Endothelial cell of umbilical vein (primary cell): ENCODE measurements at regions of chr9 and their contacts with region 1.

Region 1: DNA sequence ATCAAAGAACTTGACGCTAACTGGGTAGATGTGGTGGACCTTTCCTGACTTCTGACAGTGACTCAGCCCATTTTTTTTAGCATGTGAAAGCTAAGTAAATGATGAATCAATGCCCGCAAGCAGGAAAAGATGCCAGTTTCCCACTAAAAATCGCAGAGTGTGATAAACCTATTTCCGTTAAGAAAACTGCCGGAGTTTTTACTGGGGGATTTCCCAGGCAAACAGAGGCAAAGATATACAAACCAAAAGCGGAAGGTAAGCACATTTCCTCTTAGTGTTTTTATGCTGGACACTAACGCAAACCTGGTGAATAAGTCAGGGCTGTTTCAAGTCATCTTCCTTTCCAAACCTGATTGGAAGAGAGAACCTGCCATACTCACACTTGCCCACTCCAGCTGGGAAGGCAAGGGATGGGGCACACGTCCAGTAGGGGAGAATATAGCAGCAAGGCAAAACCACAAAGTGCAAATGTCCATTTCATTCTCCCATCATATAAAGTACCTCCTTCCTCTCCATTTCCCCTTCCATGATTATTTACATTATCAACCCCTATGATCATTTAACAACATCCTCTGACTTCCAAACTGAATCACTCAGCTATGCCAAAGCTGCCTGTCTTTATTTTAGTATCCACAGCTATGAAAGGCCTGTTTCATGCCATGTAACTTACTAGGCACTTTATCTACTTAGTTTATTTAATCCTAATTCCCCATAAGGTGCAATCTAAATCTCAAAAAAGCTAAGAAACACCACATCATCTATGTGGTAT is 349.7 kb upstream of the RFX3 start:
- DNase-seq: peak; percentile 92
- H3K4me3 ChIP-seq: no peak overlapping the region
- H3K27ac ChIP-seq: peak overlapping the region; percentile 56
- H3K4me1 ChIP-seq: peaks cover 23% of the 10 kb centered on the region
- H3K27me3 ChIP-seq: peaks cover 14 to 19% of the 10 kb centered on the region in 2 experiments
- CTCF ChIP-seq: no peak
- POLR2A ChIP-seq: peak; percentile 38

Region 2: GRCh38 chr9:3323714-3324113 is 551.8 kb before region 1 on chr9:
- CTCF ChIA-PET with region 1: no interaction called
- POLR2A ChIA-PET with region 1: no interaction called
- dilution Hi-C with region 1: no loop called
- intact Hi-C with region 1: loop called (anchors 1 kb)
- DNase-seq: peak; percentile 38
- H3K4me3 ChIP-seq: no peak overlapping the region
- H3K27ac ChIP-seq: no peak overlapping the region
- H3K4me1 ChIP-seq: peaks cover 33% of the 10 kb centered on the region
- H3K27me3 ChIP-seq: no peaks in the 10 kb centered on the region
- CTCF ChIP-seq: no peak
- POLR2A ChIP-seq: no peak

Region 3: GRCh38 chr9:3863111-3863528 is 12.4 kb before region 1 on chr9:
- CTCF ChIA-PET with region 1: interaction called, 3 read pairs
- POLR2A ChIA-PET with region 1: no interaction called
- dilution Hi-C with region 1: no loop called
- intact Hi-C with region 1: loop called (anchors 1 kb)
- DNase-seq: peak; percentile 54
- H3K4me3 ChIP-seq: no peak overlapping the region
- H3K27ac ChIP-seq: peak overlapping the region; percentile 25
- H3K4me1 ChIP-seq: peaks cover 10% of the 10 kb centered on the region
- H3K27me3 ChIP-seq: peaks cover 0 to 4% of the 10 kb centered on the region in 2 experiments
- CTCF ChIP-seq: peak in 1 of 2 donors; percentile 6
- POLR2A ChIP-seq: no peak

Region 4: DNA sequence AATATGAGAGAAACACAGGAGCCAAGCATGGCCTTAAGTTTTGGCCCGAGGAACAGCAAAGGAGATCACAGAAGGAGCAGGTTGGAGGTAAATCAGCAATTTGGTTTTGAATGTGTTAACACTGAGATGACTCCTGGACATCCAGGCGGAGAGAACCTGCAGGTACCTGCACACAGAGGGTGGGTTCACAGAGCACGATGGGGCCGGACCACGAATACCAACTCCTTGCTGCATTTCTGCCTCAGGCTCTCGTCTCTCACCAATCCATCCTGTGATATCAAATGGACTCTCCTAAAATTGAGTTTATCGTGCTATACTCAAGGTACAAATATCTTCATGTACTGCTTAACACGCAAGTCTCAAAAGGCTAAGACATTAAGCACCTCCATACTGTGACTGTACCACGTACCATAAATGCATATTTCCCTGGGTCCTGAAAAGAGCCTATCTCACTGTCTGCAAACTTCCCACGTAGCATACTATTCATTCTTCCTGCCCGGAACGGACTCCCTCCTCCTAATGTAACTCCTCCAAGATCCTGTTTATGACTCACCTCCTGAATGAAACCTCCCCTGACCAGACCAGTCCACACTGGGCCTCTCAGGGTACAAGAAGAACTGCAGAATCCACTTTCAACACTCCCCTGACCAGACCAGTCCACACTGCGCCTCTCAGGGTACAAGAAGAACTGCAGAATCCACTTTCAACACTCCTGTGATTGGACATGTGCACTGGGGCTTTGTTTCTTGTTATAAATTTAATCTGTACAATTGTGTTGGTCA is 31.1 kb after region 1 on chr9:
- CTCF ChIA-PET with region 1: no interaction called
- POLR2A ChIA-PET with region 1: no interaction called
- dilution Hi-C with region 1: no loop called
- intact Hi-C with region 1: loop called (anchors 2 kb)
- DNase-seq: peak; percentile 82
- H3K4me3 ChIP-seq: no peak overlapping the region
- H3K27ac ChIP-seq: no peak overlapping the region
- H3K4me1 ChIP-seq: peaks cover 12% of the 10 kb centered on the region
- H3K27me3 ChIP-seq: peaks cover 5 to 11% of the 10 kb centered on the region in 2 experiments
- CTCF ChIP-seq: no peak
- POLR2A ChIP-seq: no peak

Region 5: GRCh38 chr9:4137234-4137633 is 261.7 kb after region 1 on chr9:
- CTCF ChIA-PET with region 1: no interaction called
- POLR2A ChIA-PET with region 1: no interaction called
- dilution Hi-C with region 1: no loop called
- intact Hi-C with region 1: loop called (anchors 1 kb)
- DNase-seq: peak; percentile 88
- H3K4me3 ChIP-seq: no peak overlapping the region
- H3K27ac ChIP-seq: peak overlapping the region; percentile 55
- H3K4me1 ChIP-seq: peaks cover 22% of the 10 kb centered on the region
- H3K27me3 ChIP-seq: no peaks in the 10 kb centered on the region
- CTCF ChIP-seq: no peak
- POLR2A ChIP-seq: no peak